Activated T-helper 1 cell treated with anti-CD3 and anti-CD28 coated beads, Interleukin-12 subunit alpha, Interleukin-12 subunit beta, Interleukin-2, Interleukin-4 antibody, amounts not matched to agents 30 ng/mL and 10 ng/mL and 1 ng/mL, durations not matched to agents 14 hours and 24 hours and 36 hours (primary cell): ENCODE measurements at regions of chr1 and their contacts with region 1.

Region 1: DNA sequence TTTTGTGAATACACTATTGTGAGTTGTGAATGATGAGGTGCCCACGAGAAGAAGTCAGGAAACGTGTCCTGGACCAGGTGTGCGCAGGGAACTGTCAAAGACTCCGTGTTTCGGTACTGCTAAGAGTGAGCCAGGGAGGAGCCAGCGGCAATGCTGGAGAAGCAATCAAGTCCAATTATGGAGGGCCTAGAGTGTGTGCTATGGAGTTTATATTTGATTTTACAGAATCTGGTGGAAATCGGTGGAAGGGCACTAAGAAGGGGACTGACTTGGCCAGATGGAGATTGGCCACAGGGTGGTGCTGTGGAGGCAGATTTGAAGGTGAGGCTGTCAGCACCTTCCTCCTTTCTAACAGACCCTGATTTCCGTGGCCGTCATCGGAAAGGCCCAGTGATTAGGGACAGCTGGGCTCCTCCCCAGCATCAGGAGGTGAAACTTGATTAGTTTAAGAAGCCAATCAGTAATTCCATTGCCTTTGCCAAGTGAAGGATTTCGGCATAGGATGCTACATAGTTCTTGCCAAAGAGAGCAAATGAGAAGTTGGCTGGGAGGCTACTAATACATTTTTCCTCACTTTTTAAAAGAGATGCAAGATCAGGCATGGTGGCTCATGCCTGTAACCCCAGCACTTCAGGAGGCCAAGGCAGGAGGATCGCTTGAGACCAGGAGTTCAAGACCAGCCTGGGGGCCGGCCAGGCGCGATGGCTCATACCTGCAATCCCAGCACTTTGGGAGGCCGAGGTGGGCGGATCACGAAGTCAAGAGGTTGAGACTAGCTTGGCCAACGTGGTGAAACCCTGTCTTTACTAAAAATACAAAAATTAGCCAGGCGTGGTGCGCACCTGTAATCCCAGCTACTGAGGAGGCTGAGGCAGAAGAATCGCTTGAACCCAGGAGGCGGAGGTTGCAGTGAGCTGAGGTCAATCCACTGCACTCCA is 7.0 kb downstream of the PTCH2 start:
- DNase-seq: peak; percentile 71
- H3K4me3 Mint-ChIP-seq: peak overlapping the region; percentile 26
- H3K27ac Mint-ChIP-seq: no peak overlapping the region
- H3K4me1 Mint-ChIP-seq: peaks cover 9% of the 10 kb centered on the region
- H3K27me3 Mint-ChIP-seq: peaks cover 4% of the 10 kb centered on the region

Region 2: GRCh38 chr1:43035821-43036741 is 1799.9 kb before region 1 on chr1:
- intact Hi-C with region 1: no loop called
- DNase-seq: no peak
- H3K4me3 Mint-ChIP-seq: no peak overlapping the region
- H3K27ac Mint-ChIP-seq: no peak overlapping the region
- H3K4me1 Mint-ChIP-seq: peaks cover 11% of the 10 kb centered on the region
- H3K27me3 Mint-ChIP-seq: peaks cover 2% of the 10 kb centered on the region

Region 3: DNA sequence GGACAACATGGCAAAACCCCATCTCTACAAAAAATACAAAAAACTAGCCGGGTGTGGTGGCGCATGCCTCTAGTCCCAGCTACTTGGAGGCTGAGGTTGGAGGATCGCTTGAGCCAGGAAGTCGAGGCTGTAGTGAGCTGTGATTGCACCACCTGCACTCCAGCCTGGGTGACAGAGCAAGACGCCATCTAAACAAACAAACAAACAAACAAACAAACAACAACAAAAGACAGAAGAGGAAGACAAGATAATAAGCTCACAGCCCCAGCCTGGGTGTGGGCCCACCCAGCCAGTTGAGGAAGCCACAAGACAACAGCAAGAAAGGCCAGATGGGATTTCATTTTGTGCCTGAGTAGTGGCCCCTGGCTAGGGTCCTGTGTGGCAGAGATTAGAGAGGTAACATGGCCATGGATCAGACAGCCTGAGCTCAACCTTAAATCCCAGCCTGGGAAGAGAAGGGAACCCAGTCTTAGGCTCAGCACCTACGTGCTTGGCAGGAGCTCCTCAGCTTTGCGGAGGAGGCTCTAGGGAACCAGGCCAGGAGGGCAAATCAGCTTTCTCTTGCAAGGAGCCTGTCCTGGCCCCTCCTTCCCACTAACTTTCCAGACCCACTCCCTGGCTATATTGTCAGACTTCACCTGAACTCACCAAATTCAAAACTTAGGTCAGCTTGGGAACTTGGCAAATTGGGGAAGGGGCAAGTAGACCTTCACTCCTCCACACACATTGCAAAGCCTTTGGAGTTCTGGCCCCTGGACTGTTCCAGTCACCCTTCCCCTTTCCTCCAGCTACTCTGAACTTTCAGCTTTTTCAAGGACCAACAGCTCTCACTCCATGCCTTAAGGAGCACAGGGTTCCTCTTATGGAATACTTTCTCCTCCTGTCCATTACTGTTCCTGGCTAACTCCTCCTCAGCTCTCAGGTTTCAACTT is 43.0 kb before region 1 on chr1:
- intact Hi-C with region 1: loop called (anchors 2 kb)
- DNase-seq: no peak
- H3K4me3 Mint-ChIP-seq: no peak overlapping the region
- H3K27ac Mint-ChIP-seq: no peak overlapping the region
- H3K4me1 Mint-ChIP-seq: no peaks in the 10 kb centered on the region
- H3K27me3 Mint-ChIP-seq: no peaks in the 10 kb centered on the region